ENCODE measurements at regions of chr6 and their contacts with region 1.

Region 1: DNA sequence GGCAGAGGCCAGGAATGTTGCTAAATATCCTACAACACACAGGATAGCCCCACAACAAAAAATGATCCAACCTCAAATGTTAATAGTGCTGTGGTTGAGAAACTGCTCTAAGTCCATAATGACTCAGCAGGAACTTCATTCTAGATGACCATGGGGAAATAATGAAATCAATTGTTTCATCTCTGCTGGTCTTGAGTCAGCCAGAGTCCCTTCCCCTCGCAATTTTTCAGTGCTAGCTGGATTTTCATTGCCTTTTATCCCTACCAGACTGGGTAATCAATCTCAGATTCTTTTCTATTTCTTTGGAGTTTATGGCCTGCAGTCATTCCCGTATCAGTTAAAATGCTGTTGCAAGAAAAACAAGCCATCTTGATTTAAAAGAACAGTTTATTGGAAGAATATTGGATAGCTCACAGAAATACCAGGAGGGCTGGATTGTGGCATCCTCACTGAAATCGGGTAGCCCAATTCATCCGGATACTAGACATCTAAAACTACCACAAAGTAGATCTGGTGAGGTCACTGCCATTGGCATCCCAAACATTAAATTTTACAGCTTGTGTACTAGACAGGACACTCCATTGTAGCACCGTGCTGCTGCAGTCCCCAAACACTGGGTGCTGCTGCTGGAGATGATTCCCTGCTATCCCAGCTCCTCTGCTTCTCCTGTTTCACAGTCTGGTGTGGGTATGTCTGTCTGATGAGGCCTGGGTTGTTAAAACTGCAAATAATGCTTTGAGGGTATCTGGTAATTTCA is 30.3 kb upstream of the POPDC3 start:
- DNase-seq: no peak
- H3K4me3 Mint-ChIP-seq: no peak overlapping the region
- H3K27ac Mint-ChIP-seq: no peak overlapping the region
- H3K4me1 Mint-ChIP-seq: peaks cover 3% of the 10 kb centered on the region
- H3K27me3 Mint-ChIP-seq: peaks cover 20% of the 10 kb centered on the region

Region 2: GRCh38 chr6:104955927-104956730 is 254.0 kb before region 1 on chr6:
- CTCF ChIA-PET with region 1: no interaction called
- intact Hi-C with region 1: no loop called
- DNase-seq: no peak
- H3K4me3 Mint-ChIP-seq: no peak overlapping the region
- H3K27ac Mint-ChIP-seq: no peak overlapping the region
- H3K4me1 Mint-ChIP-seq: peaks cover 19% of the 10 kb centered on the region
- H3K27me3 Mint-ChIP-seq: peaks cover 62% of the 10 kb centered on the region

Region 3: DNA sequence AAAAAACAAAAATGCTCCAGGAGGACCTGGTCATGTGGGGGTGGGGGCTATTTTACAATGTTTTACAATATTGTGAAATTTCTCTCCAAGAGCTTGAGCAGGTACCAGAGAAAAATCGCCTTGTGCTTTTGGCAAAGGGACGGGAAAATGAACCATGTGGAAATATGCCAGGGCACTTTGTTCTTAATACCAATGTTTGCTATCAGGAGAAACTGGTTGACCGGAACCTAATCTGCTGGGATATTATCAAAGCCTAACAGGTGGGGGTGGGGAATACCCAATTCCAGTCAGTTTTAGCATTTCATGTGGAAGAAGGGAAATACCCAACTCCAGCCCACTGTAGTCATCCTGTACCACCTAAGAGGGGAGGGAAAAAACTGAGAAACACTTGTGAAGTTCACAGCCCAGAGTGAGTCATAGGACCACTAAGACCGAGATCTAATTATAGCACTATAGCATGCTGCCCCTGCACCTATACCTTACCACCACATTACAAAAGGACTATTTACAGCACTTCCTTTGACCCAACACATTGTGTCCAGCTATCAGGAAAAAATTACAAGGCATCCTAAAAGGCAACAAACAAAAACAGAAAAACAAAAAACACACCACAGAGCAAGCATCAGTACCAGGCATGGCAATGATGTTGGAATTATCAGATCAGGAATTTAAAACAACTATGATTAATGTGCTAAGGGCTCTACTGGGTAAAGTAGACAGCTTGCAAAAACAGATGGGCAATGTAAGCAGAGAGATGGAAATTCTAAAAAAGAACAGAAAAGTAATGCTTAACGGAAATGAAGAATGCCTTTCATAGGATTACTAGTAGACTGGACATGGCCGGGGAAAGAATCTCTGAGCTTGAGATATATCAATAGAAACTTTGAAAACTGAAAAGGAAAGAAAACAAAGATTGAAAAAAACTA is 53.8 kb after region 1 on chr6:
- CTCF ChIA-PET with region 1: no interaction called
- intact Hi-C with region 1: loop called (anchors 1 kb)
- DNase-seq: no peak
- H3K4me3 Mint-ChIP-seq: no peak overlapping the region
- H3K27ac Mint-ChIP-seq: no peak overlapping the region
- H3K4me1 Mint-ChIP-seq: peaks cover 2% of the 10 kb centered on the region
- H3K27me3 Mint-ChIP-seq: peaks cover 7% of the 10 kb centered on the region

Measured in activated naive CD4-positive, alpha-beta T cell treated with anti-CD3 and anti-CD28 coated beads for 36 hours (primary cell).